Aorta (tissue), 5 donors: ENCODE measurements at regions of chr11 and their contacts with region 1.

Region 1: GRCh38 chr11:78149646-78150045 is 10.2 kb upstream of the ALG8 start:
- DNase-seq: peak in 1 of 2 donors; percentile 74
- ATAC-seq: peak; percentile 81
- H3K4me3 ChIP-seq: no peak overlapping the region
- H3K27ac ChIP-seq: no peak overlapping the region
- H3K4me1 ChIP-seq: no peaks in the 10 kb centered on the region
- H3K27me3 ChIP-seq: no peaks in the 10 kb centered on the region

Region 2: DNA sequence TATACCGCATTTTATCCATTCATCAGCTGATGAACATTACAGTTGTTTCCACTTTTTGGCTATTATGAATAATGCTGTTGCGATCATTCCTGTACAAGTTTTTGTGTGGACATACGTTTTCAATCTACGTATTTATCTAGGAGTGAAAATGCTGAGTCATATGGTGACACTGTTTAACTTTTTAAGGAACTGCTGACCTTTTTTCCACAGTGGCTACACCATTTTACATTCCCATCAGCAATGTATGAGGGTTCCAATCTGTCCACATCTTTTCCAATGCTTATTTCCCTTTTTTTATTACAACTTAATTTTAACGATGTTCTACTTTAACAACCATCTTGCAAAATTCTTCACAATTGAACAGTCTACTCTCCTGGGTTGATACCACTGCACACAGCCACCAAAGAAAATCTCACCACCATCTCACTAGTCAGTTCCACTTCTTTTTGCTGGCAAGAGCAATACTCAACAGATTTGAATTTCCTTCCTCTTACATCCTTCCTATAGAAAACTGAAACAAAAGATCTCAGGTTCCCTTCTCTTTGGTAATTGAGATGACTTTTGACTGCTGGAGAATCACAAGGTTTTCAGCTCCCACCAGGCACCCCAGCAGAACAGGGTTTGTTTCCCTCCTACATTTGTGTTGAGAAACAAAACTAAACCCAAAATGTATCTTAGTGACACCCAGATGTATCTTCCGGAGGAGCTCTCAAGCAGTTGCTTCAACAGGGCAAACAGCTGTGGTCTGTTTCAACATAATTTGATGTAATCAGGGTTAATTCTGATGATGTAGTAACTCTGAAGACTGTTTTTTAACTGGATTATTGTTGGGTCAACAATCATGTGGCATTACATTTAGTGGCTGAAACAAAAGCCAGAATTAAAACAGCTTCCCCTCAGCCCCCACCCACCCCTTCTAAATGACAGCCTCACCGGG is 275.0 kb after region 1 on chr11:
- intact Hi-C with region 1: loop called (anchors 5 kb)
- DNase-seq: no peak
- ATAC-seq: no peak
- H3K4me3 ChIP-seq: no peak overlapping the region
- H3K27ac ChIP-seq: no peak overlapping the region
- H3K4me1 ChIP-seq: no peaks in the 10 kb centered on the region
- H3K27me3 ChIP-seq: no peaks in the 10 kb centered on the region

Region 3: GRCh38 chr11:78499971-78500370 is 350.3 kb after region 1 on chr11:
- intact Hi-C with region 1: no loop called
- DNase-seq: no peak
- ATAC-seq: no peak
- H3K4me3 ChIP-seq: no peak overlapping the region
- H3K27ac ChIP-seq: no peak overlapping the region
- H3K4me1 ChIP-seq: no peaks in the 10 kb centered on the region
- H3K27me3 ChIP-seq: no peaks in the 10 kb centered on the region

Region 4: GRCh38 chr11:78564490-78565467 is 415.1 kb after region 1 on chr11:
- intact Hi-C with region 1: loop called (anchors 5 kb)
- DNase-seq: no peak
- ATAC-seq: peak; percentile 80
- H3K4me3 ChIP-seq: no peak overlapping the region
- H3K27ac ChIP-seq: no peak overlapping the region
- H3K4me1 ChIP-seq: peaks cover 3 to 4% of the 10 kb centered on the region in 2 donors
- H3K27me3 ChIP-seq: no peaks in the 10 kb centered on the region